PC-9 (cell line): ENCODE measurements at regions of chr6 and their contacts with region 1.

Region 1: GRCh38 chr6:46993846-46994245 is 48.3 kb downstream of the ADGRF1 start:
- DNase-seq: peak; percentile 62 to 98
- H3K4me3 ChIP-seq: no peak overlapping the region
- H3K27ac ChIP-seq: peak overlapping the region; percentile 70
- H3K4me1 ChIP-seq: peaks cover 57% of the 10 kb centered on the region
- H3K27me3 ChIP-seq: no peaks in the 10 kb centered on the region
- CTCF ChIP-seq: no peak

Region 2: GRCh38 chr6:46419576-46420002 is 574.3 kb before region 1 on chr6:
- CTCF ChIA-PET with region 1: no interaction called
- POLR2A ChIA-PET with region 1: no interaction called
- intact Hi-C with region 1: loop called (anchors 1 kb)
- DNase-seq: peak in 1 of 2 experiments; percentile 48
- H3K4me3 ChIP-seq: no peak overlapping the region
- H3K27ac ChIP-seq: no peak overlapping the region
- H3K4me1 ChIP-seq: peaks cover 11% of the 10 kb centered on the region; the same call in 1 of the 2 replicates
- H3K27me3 ChIP-seq: no peaks in the 10 kb centered on the region
- CTCF ChIP-seq: peak; percentile 83

Region 3: GRCh38 chr6:46781478-46782378 is 212.1 kb before region 1 on chr6:
- CTCF ChIA-PET with region 1: no interaction called
- POLR2A ChIA-PET with region 1: no interaction called
- intact Hi-C with region 1: loop called (anchors 5 kb)
- DNase-seq: peak; percentile 34 to 58
- H3K4me3 ChIP-seq: no peak overlapping the region
- H3K27ac ChIP-seq: no peak overlapping the region
- H3K4me1 ChIP-seq: no peaks in the 10 kb centered on the region
- H3K27me3 ChIP-seq: no peaks in the 10 kb centered on the region
- CTCF ChIP-seq: peak; percentile 89

Region 4: DNA sequence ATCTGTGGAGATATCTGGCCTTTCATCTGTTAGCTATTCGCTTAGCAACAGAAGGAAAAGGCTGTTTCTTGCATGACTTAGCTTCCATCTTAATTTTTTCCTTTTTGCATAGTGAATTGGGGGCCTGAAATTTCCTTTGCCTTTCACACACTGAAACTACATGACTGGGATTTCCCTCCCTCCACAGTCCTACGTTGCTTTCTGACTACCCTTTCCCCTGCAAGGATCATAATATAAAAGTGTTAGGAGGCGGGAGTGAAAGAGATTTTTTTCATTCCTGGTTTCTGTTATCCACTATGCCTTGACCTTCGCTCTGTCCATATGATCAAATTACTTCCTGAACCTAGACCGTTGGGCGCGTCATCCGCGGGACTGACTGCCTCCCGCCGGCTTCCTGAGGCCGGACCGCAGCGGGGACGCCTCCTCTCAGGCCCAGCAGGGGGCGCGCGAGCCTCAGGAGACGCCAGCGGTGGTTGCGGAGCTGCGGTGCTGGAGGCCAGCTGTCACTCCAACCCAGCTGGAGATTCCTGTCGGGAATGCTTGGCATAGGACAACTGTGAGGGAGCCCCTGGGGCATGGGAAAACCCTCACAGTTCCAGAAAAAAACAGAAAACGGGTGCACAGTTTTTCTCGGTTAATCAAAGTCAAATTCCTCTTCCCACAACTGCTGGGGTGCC is 145.0 kb before region 1 on chr6:
- CTCF ChIA-PET with region 1: no interaction called
- POLR2A ChIA-PET with region 1: no interaction called
- intact Hi-C with region 1: loop called (anchors 1 kb)
- DNase-seq: peak; percentile 76 to 85
- H3K4me3 ChIP-seq: no peak overlapping the region
- H3K27ac ChIP-seq: 0 out of 2 replicates have a peak overlapping the region, but pooled peaks have one; percentile 12
- H3K4me1 ChIP-seq: peaks cover 37% of the 10 kb centered on the region
- H3K27me3 ChIP-seq: no peaks in the 10 kb centered on the region
- CTCF ChIP-seq: peak; percentile 96

Region 5: GRCh38 chr6:47047479-47048407 is 53.9 kb after region 1 on chr6:
- CTCF ChIA-PET with region 1: no interaction called
- POLR2A ChIA-PET with region 1: no interaction called
- intact Hi-C with region 1: loop called (anchors 1 kb)
- DNase-seq: peak; percentile 72 to 99
- H3K4me3 ChIP-seq: no peak overlapping the region; the same call in 1 of the 2 replicates
- H3K27ac ChIP-seq: peak overlapping the region; percentile 98
- H3K4me1 ChIP-seq: peaks cover 60% of the 10 kb centered on the region
- H3K27me3 ChIP-seq: no peaks in the 10 kb centered on the region
- CTCF ChIP-seq: peak; percentile 80

Region 6: GRCh38 chr6:47064274-47064673 is 70.4 kb after region 1 on chr6:
- CTCF ChIA-PET with region 1: no interaction called
- POLR2A ChIA-PET with region 1: no interaction called
- intact Hi-C with region 1: no loop called
- DNase-seq: no peak
- H3K4me3 ChIP-seq: no peak overlapping the region
- H3K27ac ChIP-seq: no peak overlapping the region
- H3K4me1 ChIP-seq: peaks cover 29% of the 10 kb centered on the region
- H3K27me3 ChIP-seq: no peaks in the 10 kb centered on the region
- CTCF ChIP-seq: no peak